Activated CD4-positive, alpha-beta memory T cell treated with anti-CD3 and anti-CD28 coated beads, Interleukin-2, amount 10 ng/mL, durations not matched to agents 7 days and 5 days (primary cell): ENCODE measurements at regions of chr4 and their contacts with region 1.

Region 1: GRCh38 chr4:154626793-154627484 is 14.5 kb upstream of the FGG start:
- DNase-seq: peak; percentile 47
- H3K4me3 Mint-ChIP-seq: no peak overlapping the region
- H3K27ac Mint-ChIP-seq: no peak overlapping the region
- H3K4me1 Mint-ChIP-seq: no peaks in the 10 kb centered on the region
- H3K27me3 Mint-ChIP-seq: peaks cover 27% of the 10 kb centered on the region

Region 2: GRCh38 chr4:154551872-154552686 is 74.9 kb before region 1 on chr4:
- CTCF ChIA-PET with region 1: interaction called, 107 read pairs
- POLR2A ChIA-PET with region 1: interaction called, 8 read pairs
- DNase-seq: peak; percentile 76
- H3K4me3 Mint-ChIP-seq: no peak overlapping the region
- H3K27ac Mint-ChIP-seq: no peak overlapping the region
- H3K4me1 Mint-ChIP-seq: peaks cover 27% of the 10 kb centered on the region
- H3K27me3 Mint-ChIP-seq: no peaks in the 10 kb centered on the region